CD8-positive, alpha-beta T cell (primary cell): ENCODE measurements at regions of chr4 and their contacts with region 1.

Region 1: DNA sequence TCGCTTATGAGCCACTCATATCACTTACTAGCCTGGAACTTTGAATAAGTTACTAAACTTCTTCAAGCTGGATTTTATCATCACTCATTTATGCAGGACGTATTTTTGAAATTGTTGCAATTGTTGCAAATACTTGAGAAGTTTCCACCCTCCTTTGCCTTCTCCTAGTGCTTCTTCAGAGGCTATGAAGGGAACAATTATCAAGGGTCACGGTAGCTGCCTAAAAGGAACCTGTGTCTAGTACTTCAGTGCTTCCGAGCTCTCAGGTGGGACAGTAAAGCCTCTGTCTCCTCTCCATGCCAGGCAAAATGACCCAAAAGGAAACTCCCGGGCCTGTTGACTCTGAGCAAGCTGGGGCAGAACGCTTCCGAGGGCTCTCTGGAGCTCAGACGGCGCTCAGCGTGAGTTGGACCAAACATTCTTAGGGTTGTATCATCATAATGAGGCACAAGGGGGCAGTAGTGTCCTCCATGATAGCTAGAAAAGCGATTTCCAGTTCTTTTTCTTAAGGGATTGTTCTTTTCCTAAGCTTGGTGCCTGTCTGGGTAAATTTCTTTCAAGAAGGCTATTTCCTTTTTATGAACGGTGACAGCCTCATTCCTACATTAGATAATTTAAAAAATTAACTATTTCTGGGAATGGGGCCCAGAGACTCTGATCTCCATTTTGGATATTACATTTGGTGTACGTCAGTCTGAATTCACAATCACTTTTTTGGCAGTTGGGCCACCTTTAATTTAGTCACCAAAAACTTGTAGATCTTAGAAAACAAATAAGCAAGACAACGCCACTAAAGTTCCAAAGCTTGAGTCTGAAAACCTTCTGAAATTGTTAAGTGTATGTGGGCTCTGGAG is 73.1 kb downstream of the PACRGL start:
- DNase-seq: peak in 4 of 9 experiments; percentile 5 to 60 (median 35)
- ATAC-seq: no peak
- H3K4me3 ChIP-seq: no peak overlapping the region
- H3K4me3 Mint-ChIP-seq: no peak overlapping the region
- H3K27ac ChIP-seq: no peak overlapping the region
- H3K27ac Mint-ChIP-seq: no peak overlapping the region
- H3K4me1 ChIP-seq: peaks cover 4% of the 10 kb centered on the region
- H3K4me1 Mint-ChIP-seq: no peaks in the 10 kb centered on the region
- H3K27me3 ChIP-seq: no peaks in the 10 kb centered on the region
- H3K27me3 Mint-ChIP-seq: peaks cover 5% of the 10 kb centered on the region
- CTCF ChIP-seq: peak; percentile 50

Region 2: DNA sequence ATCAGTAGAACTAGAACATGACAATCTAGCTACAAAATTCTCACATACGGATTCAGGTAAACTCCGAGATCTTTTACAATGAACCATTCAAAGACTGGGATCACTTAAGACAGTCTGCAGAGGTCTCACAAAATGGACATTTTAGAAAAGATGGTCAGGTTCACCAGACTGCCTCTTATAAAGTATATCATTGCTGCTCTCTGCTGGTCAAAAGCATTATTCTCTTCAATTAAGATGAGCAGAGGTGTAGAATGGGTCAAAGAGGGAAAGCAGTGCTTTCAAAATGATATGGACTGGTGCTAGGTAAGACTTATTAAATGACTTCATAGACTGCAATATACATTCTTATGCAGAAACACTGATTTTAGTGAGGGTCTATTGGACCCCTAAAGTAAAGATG is 361.6 kb after region 1 on chr4:
- CTCF ChIA-PET with region 1: interaction called, 41 read pairs
- POLR2A ChIA-PET with region 1: no interaction called
- intact Hi-C with region 1: loop called in 1 of 2 experiments (anchors 1 kb)
- DNase-seq: peak in 2 of 9 experiments; percentile 33 to 44
- ATAC-seq: no peak
- H3K4me3 ChIP-seq: no peak overlapping the region
- H3K4me3 Mint-ChIP-seq: no peak overlapping the region
- H3K27ac ChIP-seq: no peak overlapping the region
- H3K27ac Mint-ChIP-seq: no peak overlapping the region
- H3K4me1 ChIP-seq: no peaks in the 10 kb centered on the region
- H3K4me1 Mint-ChIP-seq: no peaks in the 10 kb centered on the region
- H3K27me3 ChIP-seq: no peaks in the 10 kb centered on the region
- H3K27me3 Mint-ChIP-seq: no peaks in the 10 kb centered on the region
- CTCF ChIP-seq: no peak

Region 3: GRCh38 chr4:21469438-21470300 is 696.3 kb after region 1 on chr4:
- CTCF ChIA-PET with region 1: no interaction called
- POLR2A ChIA-PET with region 1: no interaction called
- intact Hi-C with region 1: loop called in 1 of 2 experiments (anchors 5 kb)
- DNase-seq: no peak
- ATAC-seq: no peak
- H3K4me3 ChIP-seq: no peak overlapping the region
- H3K4me3 Mint-ChIP-seq: no peak overlapping the region
- H3K27ac ChIP-seq: no peak overlapping the region
- H3K27ac Mint-ChIP-seq: no peak overlapping the region
- H3K4me1 ChIP-seq: no peaks in the 10 kb centered on the region
- H3K4me1 Mint-ChIP-seq: no peaks in the 10 kb centered on the region
- H3K27me3 ChIP-seq: no peaks in the 10 kb centered on the region
- H3K27me3 Mint-ChIP-seq: no peaks in the 10 kb centered on the region
- CTCF ChIP-seq: no peak

Region 4: DNA sequence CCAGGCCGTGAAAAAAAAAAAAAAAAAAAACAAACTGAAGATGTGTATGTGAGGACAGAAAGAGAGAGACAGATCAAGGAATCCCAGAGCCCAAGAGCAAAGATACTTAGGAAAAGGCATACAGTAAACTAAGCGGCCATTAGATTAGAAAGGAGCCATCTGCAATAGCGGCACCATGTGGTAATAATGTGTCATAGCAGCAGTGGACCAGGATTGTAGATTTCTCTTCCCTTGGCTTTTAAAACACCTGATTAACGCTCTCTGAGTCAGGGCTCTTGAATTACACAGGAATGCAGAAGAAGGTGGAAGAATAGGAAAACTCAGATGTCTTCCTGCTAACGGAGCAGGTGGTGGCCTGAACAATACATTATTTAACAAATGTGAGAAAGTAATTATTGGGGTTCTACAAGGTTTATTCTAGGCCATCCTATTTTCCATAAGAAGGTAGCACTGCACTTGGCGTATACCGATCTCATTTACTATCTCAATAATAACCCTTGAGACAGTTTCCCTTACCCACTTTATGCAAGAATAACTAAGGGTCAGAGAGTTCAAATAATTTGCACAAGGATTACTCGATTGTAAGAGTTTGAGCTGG is 992.5 kb after region 1 on chr4:
- CTCF ChIA-PET with region 1: interaction called, 8 read pairs
- POLR2A ChIA-PET with region 1: no interaction called
- intact Hi-C with region 1: loop called in 1 of 2 experiments (anchors 1 kb)
- DNase-seq: peak in 4 of 9 experiments; percentile 1 to 33 (median 16)
- ATAC-seq: peak; percentile 55
- H3K4me3 ChIP-seq: no peak overlapping the region
- H3K4me3 Mint-ChIP-seq: no peak overlapping the region
- H3K27ac ChIP-seq: no peak overlapping the region
- H3K27ac Mint-ChIP-seq: no peak overlapping the region
- H3K4me1 ChIP-seq: no peaks in the 10 kb centered on the region
- H3K4me1 Mint-ChIP-seq: no peaks in the 10 kb centered on the region
- H3K27me3 ChIP-seq: no peaks in the 10 kb centered on the region
- H3K27me3 Mint-ChIP-seq: peaks cover 6% of the 10 kb centered on the region
- CTCF ChIP-seq: peak; percentile 65